CD8-positive, alpha-beta T cell (primary cell): ENCODE measurements at regions of chr1 and their contacts with region 1.

Region 1: GRCh38 chr1:203625628-203626019 is 1.0 kb upstream of the ATP2B4 start:
- DNase-seq: peak in 8 of 9 experiments; percentile 38 to 91 (median 72)
- ATAC-seq: peak; percentile 63
- H3K4me3 ChIP-seq: peak overlapping the region; percentile 77 to 89
- H3K4me3 Mint-ChIP-seq: peak overlapping the region; percentile 91
- H3K27ac ChIP-seq: peak overlapping the region; percentile 58 to 81
- H3K27ac Mint-ChIP-seq: peak overlapping the region; percentile 81
- H3K4me1 ChIP-seq: peaks cover 41% of the 10 kb centered on the region
- H3K4me1 Mint-ChIP-seq: peaks cover 44% of the 10 kb centered on the region
- H3K27me3 ChIP-seq: no peaks in the 10 kb centered on the region
- H3K27me3 Mint-ChIP-seq: no peaks in the 10 kb centered on the region
- CTCF ChIP-seq: peak; percentile 78

Region 2: GRCh38 chr1:203326830-203327683 is 298.6 kb before region 1 on chr1:
- CTCF ChIA-PET with region 1: no interaction called
- POLR2A ChIA-PET with region 1: no interaction called
- intact Hi-C with region 1: loop called (anchors 1 to 5 kb)
- DNase-seq: peak; percentile 86 to 97 (median 94)
- ATAC-seq: peak; percentile 67
- H3K4me3 ChIP-seq: peak overlapping the region; percentile 58 to 60
- H3K4me3 Mint-ChIP-seq: peak overlapping the region; percentile 74
- H3K27ac ChIP-seq: peak overlapping the region; percentile 92 to 97
- H3K27ac Mint-ChIP-seq: peak overlapping the region; percentile 93
- H3K4me1 ChIP-seq: peaks cover 65% of the 10 kb centered on the region
- H3K4me1 Mint-ChIP-seq: peaks cover 65% of the 10 kb centered on the region
- H3K27me3 ChIP-seq: no peaks in the 10 kb centered on the region
- H3K27me3 Mint-ChIP-seq: no peaks in the 10 kb centered on the region
- CTCF ChIP-seq: no peak

Region 3: GRCh38 chr1:203593723-203594122 is 31.9 kb before region 1 on chr1:
- CTCF ChIA-PET with region 1: interaction called, 23 read pairs
- POLR2A ChIA-PET with region 1: interaction called, 3 read pairs
- intact Hi-C with region 1: loop called (anchors 1 to 2 kb)
- DNase-seq: peak; percentile 32 to 82 (median 63)
- ATAC-seq: peak; percentile 85
- H3K4me3 ChIP-seq: no peak overlapping the region
- H3K4me3 Mint-ChIP-seq: no peak overlapping the region
- H3K27ac ChIP-seq: no peak overlapping the region
- H3K27ac Mint-ChIP-seq: no peak overlapping the region
- H3K4me1 ChIP-seq: no peaks in the 10 kb centered on the region
- H3K4me1 Mint-ChIP-seq: peaks cover 8% of the 10 kb centered on the region
- H3K27me3 ChIP-seq: no peaks in the 10 kb centered on the region
- H3K27me3 Mint-ChIP-seq: no peaks in the 10 kb centered on the region
- CTCF ChIP-seq: peak; percentile 35

Region 4: DNA sequence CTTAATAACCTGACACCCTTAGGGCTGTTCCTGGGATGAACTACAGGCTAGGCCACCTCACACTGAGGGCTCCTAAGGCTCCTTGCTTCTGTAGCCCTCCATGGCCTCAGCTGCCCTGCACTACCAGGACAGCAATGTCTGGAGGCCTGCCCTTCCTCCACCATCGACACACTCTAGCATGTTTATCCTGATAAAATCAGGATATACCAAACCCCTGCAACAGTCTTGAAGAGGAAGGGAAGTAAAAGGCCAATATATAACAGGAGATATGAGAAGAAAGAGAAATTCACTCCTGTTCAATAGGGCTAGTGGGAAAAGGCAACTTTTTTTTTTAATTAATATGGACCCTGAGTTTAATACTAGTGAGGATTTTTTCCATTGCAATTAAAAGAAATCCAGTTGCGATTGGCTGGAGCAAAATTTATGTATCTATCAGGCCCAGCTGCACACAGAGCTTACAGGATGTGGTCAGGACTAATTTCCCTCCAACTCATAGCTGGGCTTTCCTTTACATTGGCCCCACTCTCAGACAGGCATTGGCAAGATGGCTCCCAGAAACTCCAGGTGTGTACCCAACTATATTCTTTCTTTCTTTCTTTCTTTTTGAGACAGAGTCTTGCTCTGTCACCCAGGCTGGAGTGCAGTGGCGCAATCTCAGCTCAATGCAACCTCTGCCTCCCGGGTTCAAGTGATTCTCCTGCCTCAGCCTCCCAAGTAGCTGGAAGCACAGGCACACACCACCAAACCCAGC is 12.5 kb before region 1 on chr1:
- CTCF ChIA-PET with region 1: interaction called, 32 read pairs
- POLR2A ChIA-PET with region 1: interaction called, 12 read pairs
- intact Hi-C with region 1: no loop called
- DNase-seq: peak in 2 of 9 experiments; percentile 37 to 57
- ATAC-seq: peak; percentile 49
- H3K4me3 ChIP-seq: no peak overlapping the region
- H3K4me3 Mint-ChIP-seq: no peak overlapping the region
- H3K27ac ChIP-seq: no peak overlapping the region
- H3K27ac Mint-ChIP-seq: no peak overlapping the region
- H3K4me1 ChIP-seq: peaks cover 10% of the 10 kb centered on the region
- H3K4me1 Mint-ChIP-seq: peaks cover 30% of the 10 kb centered on the region
- H3K27me3 ChIP-seq: no peaks in the 10 kb centered on the region
- H3K27me3 Mint-ChIP-seq: no peaks in the 10 kb centered on the region
- CTCF ChIP-seq: no peak

Region 5: GRCh38 chr1:203682473-203683383 is 57.1 kb after region 1 on chr1:
- CTCF ChIA-PET with region 1: interaction called, 24 read pairs
- POLR2A ChIA-PET with region 1: interaction called, 13 read pairs
- intact Hi-C with region 1: no loop called
- DNase-seq: peak; percentile 19 to 94 (median 59)
- ATAC-seq: peak; percentile 89
- H3K4me3 ChIP-seq: no peak overlapping the region
- H3K4me3 Mint-ChIP-seq: peak overlapping the region; percentile 48
- H3K27ac ChIP-seq: peak overlapping the region; percentile 33 to 82
- H3K27ac Mint-ChIP-seq: peak overlapping the region; percentile 93
- H3K4me1 ChIP-seq: peaks cover 22% of the 10 kb centered on the region
- H3K4me1 Mint-ChIP-seq: peaks cover 43% of the 10 kb centered on the region
- H3K27me3 ChIP-seq: no peaks in the 10 kb centered on the region
- H3K27me3 Mint-ChIP-seq: no peaks in the 10 kb centered on the region
- CTCF ChIP-seq: no peak

Region 6: GRCh38 chr1:203769505-203770343 is 144.1 kb after region 1 on chr1:
- CTCF ChIA-PET with region 1: interaction called, 11 read pairs
- POLR2A ChIA-PET with region 1: interaction called, 20 read pairs
- intact Hi-C with region 1: loop called (anchors 2 to 5 kb)
- DNase-seq: peak in 1 of 9 experiments; percentile 51
- ATAC-seq: no peak
- H3K4me3 ChIP-seq: no peak overlapping the region
- H3K4me3 Mint-ChIP-seq: no peak overlapping the region
- H3K27ac ChIP-seq: peak overlapping the region in 1 of 2 experiments; percentile 50
- H3K27ac Mint-ChIP-seq: peak overlapping the region; percentile 83
- H3K4me1 ChIP-seq: peaks cover 21% of the 10 kb centered on the region
- H3K4me1 Mint-ChIP-seq: peaks cover 50% of the 10 kb centered on the region
- H3K27me3 ChIP-seq: no peaks in the 10 kb centered on the region
- H3K27me3 Mint-ChIP-seq: no peaks in the 10 kb centered on the region
- CTCF ChIP-seq: no peak

Region 7: GRCh38 chr1:204254031-204254661 is 628.5 kb after region 1 on chr1:
- CTCF ChIA-PET with region 1: no interaction called
- POLR2A ChIA-PET with region 1: no interaction called
- intact Hi-C with region 1: no loop called
- DNase-seq: no peak
- ATAC-seq: no peak
- H3K4me3 ChIP-seq: no peak overlapping the region
- H3K4me3 Mint-ChIP-seq: no peak overlapping the region
- H3K27ac ChIP-seq: no peak overlapping the region
- H3K27ac Mint-ChIP-seq: no peak overlapping the region
- H3K4me1 ChIP-seq: no peaks in the 10 kb centered on the region
- H3K4me1 Mint-ChIP-seq: no peaks in the 10 kb centered on the region
- H3K27me3 ChIP-seq: no peaks in the 10 kb centered on the region
- H3K27me3 Mint-ChIP-seq: no peaks in the 10 kb centered on the region
- CTCF ChIP-seq: no peak